ENCODE measurements at regions of chr10 and their contacts with region 1.

Region 1: GRCh38 chr10:101840741-101841453 is 2.7 kb downstream of the KCNIP2 start:
- DNase-seq: peak; percentile 35 to 83 (median 58)
- ATAC-seq: peak; percentile 76
- H3K4me3 ChIP-seq: peak overlapping the region; percentile 55
- H3K4me3 Mint-ChIP-seq: peak overlapping the region; percentile 72 to 91 (median 85)
- H3K27ac ChIP-seq: no peak overlapping the region
- H3K27ac Mint-ChIP-seq: peak overlapping the region in 5 of 9 donors; percentile 50 to 87 (median 79)
- H3K4me1 ChIP-seq: peaks cover 13 to 36% of the 10 kb centered on the region in 2 donors
- H3K4me1 Mint-ChIP-seq: peaks cover 34 to 65% (median 55%) of the 10 kb centered on the region in 7 donors
- H3K27me3 ChIP-seq: no peaks in the 10 kb centered on the region
- H3K27me3 Mint-ChIP-seq: peaks cover 0 to 19% (median 4%) of the 10 kb centered on the region in 5 donors

Region 2: DNA sequence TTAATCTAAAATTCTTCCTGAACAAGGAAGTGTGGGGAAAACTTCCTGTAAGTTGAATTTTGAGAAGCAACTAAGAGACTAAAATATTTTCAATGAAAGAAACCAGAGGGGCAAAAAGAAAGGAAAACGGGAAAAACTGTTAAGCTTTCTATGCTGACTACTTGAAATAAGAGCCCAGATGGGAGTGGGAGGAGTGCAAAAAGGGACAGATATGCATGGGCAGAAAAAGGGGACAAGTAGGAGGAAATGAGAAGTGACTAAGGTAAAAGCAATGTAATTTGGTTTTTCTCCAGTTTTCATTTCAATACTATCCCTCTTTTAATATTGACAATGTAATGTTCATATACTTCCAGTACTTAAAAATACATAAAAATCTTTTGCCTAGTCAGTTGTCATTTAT is 33.7 kb before region 1 on chr10:
- CTCF ChIA-PET with region 1: interaction called, 5 read pairs
- POLR2A ChIA-PET with region 1: interaction called, 4 read pairs
- intact Hi-C with region 1: loop called in 1 of 2 experiments (anchors 5 kb)
- DNase-seq: no peak
- ATAC-seq: no peak
- H3K4me3 ChIP-seq: no peak overlapping the region
- H3K4me3 Mint-ChIP-seq: peak overlapping the region in 1 of 10 donors; percentile 21
- H3K27ac ChIP-seq: peak overlapping the region; percentile 22
- H3K27ac Mint-ChIP-seq: peak overlapping the region in 6 of 9 donors; percentile 2 to 80 (median 43)
- H3K4me1 ChIP-seq: peaks cover 0 to 7% of the 10 kb centered on the region in 2 donors
- H3K4me1 Mint-ChIP-seq: peaks cover 2 to 44% (median 31%) of the 10 kb centered on the region in 7 donors
- H3K27me3 ChIP-seq: no peaks in the 10 kb centered on the region
- H3K27me3 Mint-ChIP-seq: no peaks in the 10 kb centered on the region

Region 3: GRCh38 chr10:101889256-101890210 is 48.6 kb after region 1 on chr10:
- CTCF ChIA-PET with region 1: interaction called, 7 read pairs
- POLR2A ChIA-PET with region 1: no interaction called
- intact Hi-C with region 1: loop called (anchors 1 to 5 kb)
- DNase-seq: peak; percentile 15 to 66 (median 53)
- ATAC-seq: peak; percentile 78
- H3K4me3 ChIP-seq: no peak overlapping the region
- H3K4me3 Mint-ChIP-seq: no peak overlapping the region
- H3K27ac ChIP-seq: no peak overlapping the region
- H3K27ac Mint-ChIP-seq: peak overlapping the region in 4 of 9 donors; percentile 9 to 46 (median 35)
- H3K4me1 ChIP-seq: no peaks in the 10 kb centered on the region
- H3K4me1 Mint-ChIP-seq: peaks cover 0 to 6% (median 2%) of the 10 kb centered on the region in 7 donors
- H3K27me3 ChIP-seq: no peaks in the 10 kb centered on the region
- H3K27me3 Mint-ChIP-seq: no peaks in the 10 kb centered on the region

Region 4: GRCh38 chr10:102055647-102056419 is 214.9 kb after region 1 on chr10 and contains the start of gene ARMH3:
- CTCF ChIA-PET with region 1: no interaction called
- POLR2A ChIA-PET with region 1: interaction called, 3 read pairs
- intact Hi-C with region 1: loop called in 1 of 2 experiments (anchors 5 kb)
- DNase-seq: peak; percentile 72 to 90 (median 87)
- ATAC-seq: peak; percentile 98
- H3K4me3 ChIP-seq: peak within 1 kb of the TSS; percentile 92
- H3K4me3 Mint-ChIP-seq: peak within 1 kb of the TSS; percentile 89 to 98 (median 94)
- H3K27ac ChIP-seq: peak within 1 kb of the TSS; percentile 87
- H3K27ac Mint-ChIP-seq: peak within 1 kb of the TSS; percentile 76 to 97 (median 92)
- H3K4me1 ChIP-seq: peaks cover 18 to 20% of the 10 kb centered on the region in 2 donors
- H3K4me1 Mint-ChIP-seq: peaks cover 25 to 50% (median 42%) of the 10 kb centered on the region in 7 donors
- H3K27me3 ChIP-seq: no peaks in the 10 kb centered on the region
- H3K27me3 Mint-ChIP-seq: no peaks in the 10 kb centered on the region
- total RNA-seq, gene ARMH3: 26.7 to 34.0 (median 28.8) TPM